Esophagus squamous epithelium (tissue), 5 donors: ENCODE measurements at regions of chr6 and their contacts with region 1.

Region 1: GRCh38 chr6:148166339-148166968 is 176.2 kb upstream of the SASH1 start:
- DNase-seq: no peak
- H3K4me3 ChIP-seq: no peak overlapping the region
- H3K27ac ChIP-seq: no peak overlapping the region
- H3K4me1 ChIP-seq: no peaks in the 10 kb centered on the region
- H3K27me3 ChIP-seq: no peaks in the 10 kb centered on the region
- CTCF ChIP-seq: peak; percentile 29 to 77 (median 67)
- POLR2A ChIP-seq: no peak

Region 2: DNA sequence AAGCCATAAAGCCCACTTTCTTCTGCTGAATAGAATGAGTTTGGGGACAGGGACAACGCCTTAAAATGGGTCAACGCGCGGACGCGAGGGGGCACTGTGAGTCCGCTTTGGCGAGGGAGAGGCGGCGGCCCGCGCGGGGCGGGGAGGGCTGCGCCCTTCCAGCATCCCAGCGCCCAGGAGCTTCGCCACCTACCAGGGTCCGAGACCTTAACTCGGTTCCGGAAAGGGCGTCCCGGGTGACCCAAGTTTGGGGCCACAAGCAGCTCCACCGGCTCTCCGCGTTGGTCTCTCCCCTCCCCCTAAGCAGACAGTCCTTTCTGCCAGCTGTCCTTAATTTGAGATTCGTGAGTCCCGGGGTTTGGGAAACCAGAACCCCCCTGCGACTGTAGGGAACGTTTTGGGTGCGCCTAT is 659.7 kb before region 1 on chr6:
- intact Hi-C with region 1: loop called (anchors 5 kb)
- DNase-seq: no peak
- H3K4me3 ChIP-seq: peak overlapping the region; percentile 50 to 76 (median 75)
- H3K27ac ChIP-seq: peak overlapping the region in 2 of 4 donors; percentile 85 to 87
- H3K4me1 ChIP-seq: peaks cover 5 to 51% (median 12%) of the 10 kb centered on the region in 3 donors
- H3K27me3 ChIP-seq: peaks cover 0 to 87% (median 0%) of the 10 kb centered on the region in 4 donors
- CTCF ChIP-seq: peak; percentile 35 to 83 (median 74)
- POLR2A ChIP-seq: no peak

Region 3: GRCh38 chr6:147909640-147910039 is 256.8 kb before region 1 on chr6:
- intact Hi-C with region 1: no loop called
- DNase-seq: no peak
- H3K4me3 ChIP-seq: no peak overlapping the region
- H3K27ac ChIP-seq: no peak overlapping the region
- H3K4me1 ChIP-seq: no peaks in the 10 kb centered on the region
- H3K27me3 ChIP-seq: no peaks in the 10 kb centered on the region
- CTCF ChIP-seq: no peak
- POLR2A ChIP-seq: no peak